ENCODE measurements at regions of chr15 and their contacts with region 1.

Region 1: GRCh38 chr15:52179278-52180195 is 11.7 kb downstream of the GNB5 start:
- DNase-seq: peak; percentile 95
- H3K4me3 ChIP-seq: peak overlapping the region; percentile 64 to 77 (median 68)
- H3K27ac ChIP-seq: peak overlapping the region; percentile 84 to 89 (median 89)
- H3K4me1 ChIP-seq: peaks cover 0 to 14% (median 12%) of the 10 kb centered on the region in 4 donors
- H3K27me3 ChIP-seq: no peaks in the 10 kb centered on the region
- CTCF ChIP-seq: no peak
- EP300 ChIP-seq: peak in 1 of 4 donors; percentile 9
- POLR2A ChIP-seq: no peak

Region 2: GRCh38 chr15:52227456-52227855 is 47.9 kb after region 1 on chr15:
- intact Hi-C with region 1: loop called (anchors 5 kb)
- DNase-seq: peak; percentile 76
- H3K4me3 ChIP-seq: no peak overlapping the region
- H3K27ac ChIP-seq: no peak overlapping the region
- H3K4me1 ChIP-seq: no peaks in the 10 kb centered on the region
- H3K27me3 ChIP-seq: no peaks in the 10 kb centered on the region
- CTCF ChIP-seq: peak; percentile 51 to 82 (median 64)
- EP300 ChIP-seq: no peak
- POLR2A ChIP-seq: no peak

Region 3: GRCh38 chr15:52351206-52351908 is 171.8 kb after region 1 on chr15:
- intact Hi-C with region 1: no loop called
- DNase-seq: peak; percentile 63
- H3K4me3 ChIP-seq: no peak overlapping the region
- H3K27ac ChIP-seq: no peak overlapping the region
- H3K4me1 ChIP-seq: peaks cover 0 to 11% (median 0%) of the 10 kb centered on the region in 4 donors
- H3K27me3 ChIP-seq: no peaks in the 10 kb centered on the region
- CTCF ChIP-seq: no peak
- EP300 ChIP-seq: no peak
- POLR2A ChIP-seq: no peak